Activated CD4-positive, alpha-beta T cell treated with anti-CD3 and anti-CD28 coated beads, Interleukin-2, amount 10 ng/mL, durations not matched to agents 7 days and 5 days (primary cell): ENCODE measurements at regions of chr2 and their contacts with region 1.

Region 1: GRCh38 chr2:161063157-161063954 is 96.9 kb upstream of the TANK start:
- DNase-seq: peak; percentile 76
- H3K4me3 Mint-ChIP-seq: no peak overlapping the region
- H3K27ac Mint-ChIP-seq: no peak overlapping the region
- H3K4me1 Mint-ChIP-seq: peaks cover 13% of the 10 kb centered on the region
- H3K27me3 Mint-ChIP-seq: peaks cover 4% of the 10 kb centered on the region

Region 2: DNA sequence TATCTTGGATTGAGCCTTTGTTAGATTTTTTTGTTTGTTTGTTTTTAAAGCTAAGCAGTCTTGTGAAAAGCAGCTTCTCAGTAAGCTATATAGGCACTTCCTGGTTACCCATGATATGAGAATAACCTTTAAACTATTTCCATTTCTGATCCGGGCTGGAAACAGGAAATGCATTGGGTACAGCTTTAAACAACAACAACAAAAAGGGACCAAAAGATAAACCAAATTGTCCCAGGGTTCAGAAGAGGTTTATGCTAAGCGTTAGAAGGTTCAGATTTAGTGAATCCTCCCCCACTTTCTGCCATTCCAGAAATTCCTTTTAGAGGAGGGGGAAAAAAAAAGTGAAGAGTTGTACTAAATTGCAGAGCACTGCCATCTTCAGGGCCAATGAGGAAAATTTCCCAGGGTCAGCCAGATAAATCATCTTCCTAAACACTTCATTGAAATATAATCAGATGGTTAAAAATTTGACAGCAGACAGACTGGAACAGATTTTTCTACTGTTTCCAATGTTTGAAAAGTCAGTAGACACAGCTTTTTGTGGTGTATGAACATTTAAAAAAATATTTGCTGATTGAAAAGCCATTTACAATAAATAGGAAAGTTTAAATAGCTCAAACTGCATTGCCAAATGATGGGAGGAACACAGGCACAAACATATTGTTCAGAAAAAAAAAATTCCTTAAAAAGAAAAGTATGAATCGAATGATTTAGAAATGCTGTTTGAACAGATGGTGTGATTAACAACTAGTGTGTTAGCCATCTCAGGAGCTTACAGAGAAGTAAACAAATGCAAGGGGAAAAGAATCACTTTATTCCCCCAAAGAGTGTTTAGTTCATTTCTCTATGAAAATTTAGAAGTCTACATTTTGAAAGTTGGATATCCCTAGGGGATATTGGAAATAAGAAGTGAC is 93.0 kb before region 1 on chr2:
- CTCF ChIA-PET with region 1: no interaction called
- POLR2A ChIA-PET with region 1: no interaction called
- DNase-seq: no peak
- H3K4me3 Mint-ChIP-seq: no peak overlapping the region
- H3K27ac Mint-ChIP-seq: no peak overlapping the region
- H3K4me1 Mint-ChIP-seq: peaks cover 5% of the 10 kb centered on the region
- H3K27me3 Mint-ChIP-seq: peaks cover 7% of the 10 kb centered on the region

Region 3: DNA sequence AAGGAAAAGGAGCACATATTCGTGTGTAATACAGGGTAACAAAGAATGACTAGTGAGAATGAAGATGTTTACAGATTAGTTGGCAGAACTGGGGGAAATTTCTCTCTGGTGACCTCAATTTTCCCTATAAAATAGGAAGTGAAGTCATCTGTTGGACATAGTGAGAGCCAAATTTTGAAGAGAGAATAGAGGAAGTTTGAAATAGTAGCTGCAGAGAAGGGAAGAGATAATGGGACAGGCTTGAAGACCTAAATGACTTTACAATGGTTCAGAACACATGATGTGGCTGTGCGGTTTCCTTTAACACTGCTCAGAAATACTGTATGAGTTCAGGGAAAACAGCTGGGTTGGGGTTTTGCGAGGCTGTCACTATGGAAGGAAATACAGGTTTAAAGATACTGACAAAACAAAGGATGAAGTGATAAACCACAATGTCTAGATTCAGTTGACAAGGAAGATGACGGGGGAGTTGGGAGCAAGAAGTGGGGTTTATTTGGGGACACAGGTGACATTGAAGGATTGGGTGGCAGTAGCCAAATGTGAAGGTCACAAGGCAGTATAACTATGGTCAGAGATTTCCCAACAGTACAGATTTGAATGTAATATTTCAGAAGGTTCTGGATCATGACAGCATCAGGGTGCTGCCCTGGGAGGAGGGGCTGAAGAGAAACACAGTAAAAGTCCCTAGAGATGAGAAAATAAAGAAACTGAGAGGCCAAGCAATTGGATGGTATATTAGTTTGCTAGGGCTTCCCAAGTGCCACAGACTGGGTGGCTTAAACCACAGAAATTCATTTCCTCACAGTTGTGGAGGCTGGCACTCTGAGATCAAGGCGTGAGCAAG is 14.2 kb after region 1 on chr2:
- CTCF ChIA-PET with region 1: interaction called, 43 read pairs
- POLR2A ChIA-PET with region 1: no interaction called
- DNase-seq: peak; percentile 91
- H3K4me3 Mint-ChIP-seq: peak overlapping the region; percentile 44
- H3K27ac Mint-ChIP-seq: peak overlapping the region; percentile 94
- H3K4me1 Mint-ChIP-seq: peaks cover 46% of the 10 kb centered on the region
- H3K27me3 Mint-ChIP-seq: no peaks in the 10 kb centered on the region

Region 4: GRCh38 chr2:161160226-161161069 is 97.1 kb after region 1 on chr2 and contains the start of gene TANK:
- CTCF ChIA-PET with region 1: no interaction called
- POLR2A ChIA-PET with region 1: no interaction called
- DNase-seq: peak; percentile 93
- H3K4me3 Mint-ChIP-seq: peak within 1 kb of the TSS; percentile 98
- H3K27ac Mint-ChIP-seq: peak within 1 kb of the TSS; percentile 99
- H3K4me1 Mint-ChIP-seq: peaks cover 47% of the 10 kb centered on the region
- H3K27me3 Mint-ChIP-seq: no peaks in the 10 kb centered on the region
- total RNA-seq, gene TANK: 71.5 to 74.1 TPM